AG04450 (cell line): ENCODE measurements at regions of chr2 and their contacts with region 1.

Region 1: DNA sequence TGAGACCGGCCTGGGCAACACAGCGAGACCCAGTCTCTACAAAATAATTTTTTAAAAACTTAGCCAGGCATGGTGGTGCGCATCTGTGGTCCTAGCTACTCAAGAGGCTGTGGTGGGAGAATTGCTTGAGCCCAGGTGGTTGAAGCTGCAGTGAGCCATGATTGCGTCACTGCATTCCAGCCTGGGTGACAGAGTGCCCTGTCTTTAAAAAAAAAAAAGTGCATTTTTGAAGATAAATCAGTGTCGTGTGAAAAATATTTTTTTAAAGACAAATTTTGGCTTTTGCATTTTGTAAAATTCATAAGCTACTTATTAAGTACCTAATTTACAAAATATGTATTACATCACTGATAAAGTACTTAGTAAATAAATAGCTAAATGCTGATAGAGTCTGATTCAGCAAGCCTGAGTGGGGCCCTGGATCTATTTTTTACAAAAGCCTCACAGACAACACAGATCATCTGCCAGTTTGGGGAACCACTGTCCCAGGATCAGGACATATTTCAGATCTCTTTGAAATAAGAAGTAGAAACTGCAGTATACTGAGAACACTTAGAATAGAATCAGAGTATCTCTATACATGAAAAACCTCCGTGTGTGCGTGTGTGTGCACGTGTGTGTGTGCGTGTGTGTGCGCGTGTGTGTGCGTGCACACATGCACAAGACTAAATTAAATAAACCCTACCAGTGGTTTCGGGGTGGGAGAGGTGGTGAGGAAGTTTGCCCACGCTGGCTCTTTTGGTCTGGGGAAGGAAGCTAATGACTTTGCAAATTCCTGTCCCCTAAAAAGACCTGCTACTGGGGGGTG is 61.6 kb downstream of the AAK1 start:
- DNase-seq: no peak
- H3K4me3 ChIP-seq: no peak overlapping the region
- H3K27ac ChIP-seq: no peak overlapping the region
- H3K27me3 ChIP-seq: no peaks in the 10 kb centered on the region
- CTCF ChIP-seq: no peak

Region 2: GRCh38 chr2:69565431-69565839 is 16.5 kb before region 1 on chr2:
- CTCF ChIA-PET with region 1: interaction called, 13 read pairs
- POLR2A ChIA-PET with region 1: no interaction called
- DNase-seq: no peak
- H3K4me3 ChIP-seq: no peak overlapping the region
- H3K27ac ChIP-seq: no peak overlapping the region
- H3K27me3 ChIP-seq: no peaks in the 10 kb centered on the region
- CTCF ChIP-seq: peak; percentile 57

Region 3: DNA sequence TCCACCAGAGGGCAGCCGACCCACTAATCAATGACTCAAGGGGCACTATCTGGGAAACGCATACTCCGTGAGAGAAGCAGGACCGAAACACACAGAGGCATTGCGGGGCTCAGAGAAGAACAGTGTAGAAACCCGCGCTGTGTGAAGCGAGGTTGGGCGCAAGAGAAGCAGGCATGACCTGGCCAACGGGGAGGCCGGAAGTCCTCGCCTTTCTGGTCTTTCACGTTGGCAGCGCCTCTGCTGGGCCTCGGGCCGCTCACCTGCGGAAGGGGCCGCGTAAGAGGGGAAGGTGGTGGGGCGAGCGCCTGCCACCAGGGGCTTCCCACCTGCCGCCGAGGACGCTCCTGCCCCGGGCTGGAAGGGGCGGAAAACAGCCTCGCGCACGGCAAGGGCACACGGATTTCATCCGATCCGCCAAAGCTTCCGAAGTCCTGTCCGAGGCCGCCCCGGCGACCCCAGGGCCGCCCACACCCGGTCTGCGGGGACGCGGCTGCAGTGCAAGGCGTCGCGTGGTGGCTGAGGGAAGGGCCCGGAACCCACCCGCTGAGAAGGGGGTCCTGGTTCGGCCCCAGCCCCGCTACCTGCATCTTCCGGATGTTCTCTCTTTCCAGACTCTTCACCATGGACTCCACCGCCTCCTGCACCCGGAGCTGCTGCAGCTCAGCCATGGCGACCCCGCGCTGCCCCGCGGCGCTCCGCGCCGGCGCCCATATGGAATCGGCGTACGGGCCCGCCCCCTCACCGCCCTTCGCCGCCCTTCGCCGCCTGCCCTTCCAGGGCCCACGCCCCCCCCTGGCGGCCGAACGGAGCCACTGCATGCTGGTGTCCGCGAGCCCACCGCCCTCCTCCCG is 719.6 kb after region 1 on chr2 and contains the start of gene FAM136A:
- CTCF ChIA-PET with region 1: no interaction called
- POLR2A ChIA-PET with region 1: no interaction called
- DNase-seq: peak; percentile 11
- H3K4me3 ChIP-seq: peak within 1 kb of the TSS; percentile 83
- H3K27ac ChIP-seq: peak within 1 kb of the TSS; percentile 11
- H3K27me3 ChIP-seq: peaks cover 2% of the 10 kb centered on the region
- CTCF ChIP-seq: peak; percentile 77
- polyA plus RNA-seq, gene FAM136A: 25.8 and 34.1 TPM in 2 replicates